CD14-positive monocyte (primary cell): ENCODE measurements at regions of chr13 and their contacts with region 1.

Region 1: GRCh38 chr13:99322297-99323103 is 15.3 kb upstream of the GPR183 start:
- DNase-seq: peak; percentile 83 to 91 (median 90)
- H3K4me3 ChIP-seq: peak overlapping the region in 1 of 3 experiments; percentile 6
- H3K4me3 Mint-ChIP-seq: peak overlapping the region in 1 of 2 donors; percentile 83
- H3K27ac ChIP-seq: peak overlapping the region; percentile 68 to 94
- H3K27ac Mint-ChIP-seq: peak overlapping the region; percentile 98 to 99 (median 99)
- H3K4me1 ChIP-seq: peaks cover 52 to 53% of the 10 kb centered on the region in 2 donors
- H3K4me1 Mint-ChIP-seq: peaks cover 57% of the 10 kb centered on the region
- H3K27me3 ChIP-seq: no peaks in the 10 kb centered on the region
- H3K27me3 Mint-ChIP-seq: peaks cover 0 to 3% (median 3%) of the 10 kb centered on the region in 3 donors
- CTCF ChIP-seq: no peak

Region 2: GRCh38 chr13:99265821-99266426 is 56.6 kb before region 1 on chr13:
- intact Hi-C with region 1: no loop called
- DNase-seq: peak; percentile 44 to 66 (median 61)
- H3K4me3 ChIP-seq: no peak overlapping the region
- H3K4me3 Mint-ChIP-seq: no peak overlapping the region
- H3K27ac ChIP-seq: no peak overlapping the region
- H3K27ac Mint-ChIP-seq: no peak overlapping the region
- H3K4me1 ChIP-seq: peaks cover 26 to 45% of the 10 kb centered on the region in 2 donors
- H3K4me1 Mint-ChIP-seq: peaks cover 51% of the 10 kb centered on the region
- H3K27me3 ChIP-seq: no peaks in the 10 kb centered on the region
- H3K27me3 Mint-ChIP-seq: peaks cover 0 to 2% (median 0%) of the 10 kb centered on the region in 3 donors
- CTCF ChIP-seq: peak; percentile 84

Region 3: DNA sequence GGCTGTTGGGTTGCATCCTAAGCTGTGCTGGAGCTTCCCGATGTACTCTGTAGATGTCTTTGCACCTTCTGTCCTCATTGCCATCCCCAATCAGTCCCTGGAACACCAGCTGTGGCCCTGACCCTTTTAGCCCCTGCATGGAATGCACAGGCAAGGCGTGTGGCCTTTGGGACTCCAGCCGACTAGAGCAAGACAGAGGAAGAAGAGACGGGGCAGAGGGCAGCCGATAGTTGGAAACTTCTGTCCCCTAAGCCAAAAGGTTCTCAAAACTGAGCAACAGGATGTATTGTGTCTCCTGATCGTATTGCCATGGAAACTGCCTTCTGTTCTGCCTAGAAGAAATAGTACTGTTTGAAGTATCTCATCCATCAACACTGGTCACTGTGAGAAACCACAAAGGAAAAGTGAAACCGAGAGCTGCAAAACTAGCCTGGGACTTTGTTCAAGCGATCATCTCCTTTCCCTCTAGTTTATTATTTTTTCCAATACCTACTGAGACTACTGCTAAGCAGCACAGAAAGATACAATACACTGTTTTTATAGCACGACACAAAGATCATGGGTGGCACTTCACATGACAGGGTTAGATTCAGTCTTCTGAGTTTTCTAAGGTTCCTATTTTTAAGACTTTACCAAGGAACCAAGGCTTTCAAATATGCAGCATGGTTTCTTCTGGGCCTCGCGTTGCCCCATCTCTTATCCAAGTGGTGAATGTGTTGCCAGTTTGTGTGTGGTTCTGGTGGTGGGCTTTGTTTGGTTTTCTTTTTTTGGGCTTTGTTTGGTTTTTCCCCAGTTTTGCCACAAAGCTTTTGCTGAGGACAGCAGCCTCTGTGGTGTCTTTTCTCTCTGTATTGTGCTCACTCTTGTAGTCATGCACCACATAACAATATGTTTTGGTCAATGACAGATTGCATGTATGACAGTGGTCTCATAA is 33.9 kb after region 1 on chr13:
- intact Hi-C with region 1: loop called in 1 of 2 experiments (anchors 5 kb)
- DNase-seq: peak; percentile 79 to 93 (median 86)
- H3K4me3 ChIP-seq: peak overlapping the region in 2 of 3 experiments; percentile 9 to 65
- H3K4me3 Mint-ChIP-seq: peak overlapping the region; percentile 66 to 89
- H3K27ac ChIP-seq: peak overlapping the region; percentile 86 to 97
- H3K27ac Mint-ChIP-seq: peak overlapping the region; percentile 95 to 98 (median 96)
- H3K4me1 ChIP-seq: peaks cover 30 to 36% of the 10 kb centered on the region in 2 donors
- H3K4me1 Mint-ChIP-seq: peaks cover 44% of the 10 kb centered on the region
- H3K27me3 ChIP-seq: no peaks in the 10 kb centered on the region
- H3K27me3 Mint-ChIP-seq: no peaks in the 10 kb centered on the region
- CTCF ChIP-seq: no peak

Region 4: DNA sequence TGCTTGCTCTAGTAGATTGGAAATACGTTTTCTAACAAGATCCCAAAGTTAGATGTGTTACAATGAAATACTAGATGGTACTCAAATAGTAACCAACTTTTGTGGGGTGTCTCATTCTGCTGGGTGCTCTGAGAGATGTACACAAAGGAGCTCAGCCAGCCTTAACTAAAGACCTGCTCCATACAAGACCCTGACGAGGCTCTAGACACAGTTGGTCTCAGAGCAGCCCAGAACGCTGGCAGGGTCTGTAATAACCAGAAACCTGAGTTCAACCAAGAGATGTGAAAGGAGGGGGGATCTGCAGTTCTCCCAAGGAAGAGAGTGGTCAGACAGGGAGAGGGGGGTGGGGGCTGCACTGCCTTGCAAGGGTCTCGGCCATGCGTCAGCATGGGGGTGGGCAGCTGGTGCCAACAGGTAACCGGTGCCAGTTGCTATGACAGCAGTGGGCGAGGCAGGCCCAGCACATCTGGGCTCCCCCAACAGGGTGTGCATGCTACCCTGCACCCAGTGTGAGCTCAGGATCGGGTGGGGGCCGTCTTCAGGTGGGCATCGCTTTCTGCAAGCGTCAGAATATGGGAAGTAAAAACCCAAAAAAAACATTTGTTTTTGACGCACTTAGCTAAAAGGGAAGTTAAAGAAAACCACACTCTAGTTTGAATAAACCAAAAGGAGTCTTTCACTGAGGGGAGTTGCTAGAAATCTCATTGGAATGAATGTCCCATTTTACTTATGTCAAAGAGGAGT is 52.7 kb after region 1 on chr13:
- intact Hi-C with region 1: loop called (anchors 5 to 10 kb)
- DNase-seq: peak; percentile 58 to 77 (median 65)
- H3K4me3 ChIP-seq: peak overlapping the region in 2 of 3 experiments; percentile 19 to 52
- H3K4me3 Mint-ChIP-seq: peak overlapping the region; percentile 59 to 76
- H3K27ac ChIP-seq: peak overlapping the region; percentile 82 to 89
- H3K27ac Mint-ChIP-seq: peak overlapping the region; percentile 83 to 97 (median 95)
- H3K4me1 ChIP-seq: peaks cover 40 to 51% of the 10 kb centered on the region in 2 donors
- H3K4me1 Mint-ChIP-seq: peaks cover 67% of the 10 kb centered on the region
- H3K27me3 ChIP-seq: no peaks in the 10 kb centered on the region
- H3K27me3 Mint-ChIP-seq: no peaks in the 10 kb centered on the region
- CTCF ChIP-seq: no peak

Region 5: DNA sequence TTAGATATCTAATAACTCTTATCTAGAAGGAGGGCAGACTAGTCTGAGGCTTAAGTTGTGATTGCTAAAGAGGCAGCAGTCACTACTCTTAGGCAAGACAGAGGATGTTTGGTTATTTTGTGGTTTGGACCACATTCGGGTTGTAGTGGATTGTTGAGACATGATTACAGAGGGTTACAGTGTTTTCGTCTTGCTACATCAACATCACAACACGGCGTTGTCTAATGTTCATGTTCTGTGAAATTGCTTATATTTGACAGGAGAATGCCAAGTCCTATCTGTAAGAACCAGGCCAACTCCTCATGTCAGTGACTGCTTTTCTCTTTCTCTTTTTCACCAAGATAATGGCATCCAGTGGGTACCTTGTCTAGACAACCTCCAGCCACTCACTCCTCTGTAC is 162.0 kb after region 1 on chr13:
- intact Hi-C with region 1: no loop called
- DNase-seq: peak; percentile 74 to 92 (median 77)
- H3K4me3 ChIP-seq: peak overlapping the region in 1 of 3 experiments; percentile 28
- H3K4me3 Mint-ChIP-seq: peak overlapping the region; percentile 61 to 88
- H3K27ac ChIP-seq: peak overlapping the region in 1 of 2 donors; percentile 62
- H3K27ac Mint-ChIP-seq: peak overlapping the region; percentile 80 to 92 (median 88)
- H3K4me1 ChIP-seq: peaks cover 38 to 45% of the 10 kb centered on the region in 2 donors
- H3K4me1 Mint-ChIP-seq: peaks cover 48% of the 10 kb centered on the region
- H3K27me3 ChIP-seq: no peaks in the 10 kb centered on the region
- H3K27me3 Mint-ChIP-seq: no peaks in the 10 kb centered on the region
- CTCF ChIP-seq: no peak